Breast epithelium (tissue), 4 donors: ENCODE measurements at regions of chr17 and their contacts with region 1.

Region 1: DNA sequence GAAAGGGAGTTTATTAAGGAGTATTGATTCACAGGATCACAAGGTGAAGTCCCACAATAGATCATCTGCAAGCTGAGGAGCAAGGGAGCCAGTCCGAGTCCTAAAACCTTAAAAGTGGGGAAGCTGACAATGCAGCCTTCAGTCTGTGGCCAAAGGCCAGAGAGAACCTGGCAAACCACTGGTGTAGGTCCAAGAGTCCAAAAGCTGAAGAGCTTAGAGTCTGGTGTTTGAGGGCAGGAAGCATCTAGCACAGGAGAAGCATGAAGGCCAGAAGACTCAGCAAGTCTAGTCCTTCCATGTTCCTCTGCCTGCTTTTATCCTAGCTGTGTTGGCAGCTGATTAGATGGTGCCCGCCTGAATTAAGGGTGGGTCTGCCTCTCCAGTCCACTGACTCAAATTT is 193.0 kb downstream of the KIF2B start:
- DNase-seq: no peak
- H3K4me3 ChIP-seq: no peak overlapping the region
- H3K27ac ChIP-seq: no peak overlapping the region
- H3K4me1 ChIP-seq: no peaks in the 10 kb centered on the region
- H3K27me3 ChIP-seq: no peaks in the 10 kb centered on the region
- CTCF ChIP-seq: no peak
- POLR2A ChIP-seq: no peak

Region 2: GRCh38 chr17:53819956-53820355 is 195.8 kb before region 1 on chr17:
- intact Hi-C with region 1: loop called (anchors 5 kb)
- DNase-seq: no peak
- H3K4me3 ChIP-seq: no peak overlapping the region
- H3K27ac ChIP-seq: no peak overlapping the region
- H3K4me1 ChIP-seq: no peaks in the 10 kb centered on the region
- H3K27me3 ChIP-seq: no peaks in the 10 kb centered on the region
- CTCF ChIP-seq: no peak
- POLR2A ChIP-seq: no peak